A549 (cell line): ENCODE measurements at regions of chr11 and their contacts with region 1.

Region 1: DNA sequence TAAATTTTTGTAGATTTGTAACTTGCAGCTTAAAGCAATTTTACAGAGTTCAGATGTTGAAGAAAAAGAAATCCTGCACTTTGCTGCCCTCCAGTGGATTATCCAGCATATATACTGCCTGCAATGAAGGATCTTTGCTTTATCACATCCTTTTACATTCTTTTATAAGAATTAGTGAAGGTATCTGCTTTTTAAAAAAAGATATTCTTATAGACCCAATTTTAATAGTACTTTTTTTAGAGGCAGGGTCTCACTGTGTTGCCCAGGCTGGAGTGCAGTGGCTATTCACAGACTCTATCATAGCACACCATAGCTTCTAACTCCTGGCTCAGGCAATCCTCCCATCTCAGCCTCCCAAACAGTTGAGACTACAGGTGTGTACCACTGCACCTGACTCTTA is 60.7 kb downstream of the TTC17 start:
- DNase-seq: peak; percentile 6 to 44
- ATAC-seq: peak; percentile 70 to 87; a peak in 4 of 6 replicates
- H3K4me3 ChIP-seq: no peak overlapping the region
- H3K27ac ChIP-seq: no peak overlapping the region
- H3K4me1 ChIP-seq: no peaks in the 10 kb centered on the region
- CTCF ChIP-seq: peak; percentile 76
- EP300 ChIP-seq: no peak
- POLR2A ChIP-seq: no peak
- RAD21 ChIP-seq: peak; percentile 65 to 70

Region 2: DNA sequence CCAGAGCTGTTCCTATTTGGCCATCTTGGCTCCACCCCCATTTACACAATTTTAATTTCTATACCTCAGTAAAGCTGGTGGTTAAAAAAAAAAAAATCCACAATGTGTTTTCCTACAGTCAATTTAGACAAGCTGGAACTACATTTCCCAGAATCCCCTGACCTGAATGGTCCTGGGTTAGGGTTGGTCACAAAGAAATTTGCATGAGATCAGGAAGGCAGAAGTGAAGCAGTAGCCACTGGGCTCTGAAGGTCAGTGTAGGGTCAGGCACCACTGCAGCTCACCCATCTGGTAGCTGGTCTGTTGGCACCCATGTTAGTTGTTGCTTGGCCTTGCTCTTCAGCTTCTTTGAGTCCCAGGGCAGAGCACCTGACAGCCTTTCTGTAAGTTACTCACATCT is 318.3 kb before region 1 on chr11:
- CTCF ChIA-PET with region 1: no interaction called
- POLR2A ChIA-PET with region 1: no interaction called
- DNase-seq: no peak
- ATAC-seq: no peak
- H3K4me3 ChIP-seq: no peak overlapping the region
- H3K27ac ChIP-seq: no peak overlapping the region
- H3K4me1 ChIP-seq: no peaks in the 10 kb centered on the region
- CTCF ChIP-seq: no peak
- EP300 ChIP-seq: no peak
- POLR2A ChIP-seq: no peak
- RAD21 ChIP-seq: no peak

Region 3: GRCh38 chr11:43404836-43405479 is 14.5 kb before region 1 on chr11:
- CTCF ChIA-PET with region 1: interaction called, 10 read pairs
- POLR2A ChIA-PET with region 1: no interaction called
- DNase-seq: no peak
- ATAC-seq: no peak
- H3K4me3 ChIP-seq: no peak overlapping the region
- H3K27ac ChIP-seq: no peak overlapping the region
- H3K4me1 ChIP-seq: peaks cover 8% of the 10 kb centered on the region
- CTCF ChIP-seq: no peak
- EP300 ChIP-seq: no peak
- POLR2A ChIP-seq: no peak
- RAD21 ChIP-seq: no peak

Region 4: GRCh38 chr11:43632171-43632570 is 212.7 kb after region 1 on chr11:
- CTCF ChIA-PET with region 1: no interaction called
- POLR2A ChIA-PET with region 1: no interaction called
- DNase-seq: no peak
- ATAC-seq: no peak
- H3K4me3 ChIP-seq: no peak overlapping the region
- H3K27ac ChIP-seq: no peak overlapping the region
- H3K4me1 ChIP-seq: no peaks in the 10 kb centered on the region
- CTCF ChIP-seq: no peak
- EP300 ChIP-seq: no peak
- POLR2A ChIP-seq: no peak
- RAD21 ChIP-seq: no peak